ENCODE measurements at regions of chr12 and their contacts with region 1.

Region 1: GRCh38 chr12:53065975-53066931 is 12.9 kb downstream of the SPRYD3 start:
- DNase-seq: peak; percentile 63
- H3K4me3 ChIP-seq: no peak overlapping the region
- H3K27ac ChIP-seq: no peak overlapping the region
- H3K4me1 ChIP-seq: no peaks in the 10 kb centered on the region
- CTCF ChIP-seq: peak; percentile 93

Region 2: GRCh38 chr12:52949413-52950331 is 116.6 kb before region 1 on chr12:
- CTCF ChIA-PET with region 1: no interaction called
- POLR2A ChIA-PET with region 1: no interaction called
- intact Hi-C with region 1: no loop called
- DNase-seq: no peak
- H3K4me3 ChIP-seq: no peak overlapping the region
- H3K27ac ChIP-seq: no peak overlapping the region
- H3K4me1 ChIP-seq: peaks cover 4% of the 10 kb centered on the region
- CTCF ChIP-seq: no peak

Region 3: DNA sequence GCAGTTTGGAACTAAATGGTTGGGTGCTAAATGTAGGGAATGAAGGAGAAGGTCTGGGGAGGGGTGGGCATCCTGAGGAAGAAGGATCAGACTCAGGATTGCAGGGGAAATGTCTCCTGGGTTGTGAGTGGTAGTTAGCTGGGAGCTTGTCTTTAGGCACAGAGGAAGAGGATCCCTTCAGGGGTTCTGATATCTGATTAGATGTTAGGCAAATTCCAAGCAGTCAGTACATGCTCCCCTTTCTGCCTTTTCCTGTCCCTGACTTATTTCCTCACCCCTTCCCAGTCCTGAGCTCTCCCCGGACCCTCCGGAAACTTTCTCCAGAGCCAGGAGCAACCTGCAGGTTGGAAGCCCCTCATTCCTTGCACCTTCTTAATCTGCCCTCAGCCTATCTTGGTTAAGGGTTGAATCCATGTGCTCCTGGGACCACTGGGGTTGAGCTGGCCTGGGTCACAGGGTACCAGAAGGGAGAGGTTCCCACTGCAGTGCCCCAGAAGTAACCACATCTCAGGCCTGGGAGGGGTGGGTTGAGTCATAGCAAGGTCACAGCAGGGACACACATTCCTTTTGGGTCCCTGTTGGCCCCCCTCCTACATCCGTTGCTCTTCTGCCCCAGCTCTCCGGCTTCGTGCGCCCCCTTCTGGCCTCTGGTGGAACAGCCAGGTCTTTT is 32.9 kb after region 1 on chr12:
- CTCF ChIA-PET with region 1: interaction called, 13 read pairs
- POLR2A ChIA-PET with region 1: interaction called, 9 read pairs
- intact Hi-C with region 1: loop called (anchors 1 kb)
- DNase-seq: peak; percentile 77
- H3K4me3 ChIP-seq: no peak overlapping the region
- H3K27ac ChIP-seq: no peak overlapping the region
- H3K4me1 ChIP-seq: peaks cover 38% of the 10 kb centered on the region
- CTCF ChIP-seq: peak; percentile 96